ENCODE measurements at regions of chr15 and their contacts with region 1.

Region 1: GRCh38 chr15:52227456-52227855 is 36.3 kb upstream of the GNB5 start:
- DNase-seq: peak; percentile 25 to 67
- H3K4me3 ChIP-seq: no peak overlapping the region
- H3K27ac ChIP-seq: no peak overlapping the region
- H3K4me1 ChIP-seq: no peaks in the 10 kb centered on the region
- H3K27me3 ChIP-seq: no peaks in the 10 kb centered on the region
- CTCF ChIP-seq: peak; percentile 20 to 82 (median 58)
- EP300 ChIP-seq: no peak
- POLR2A ChIP-seq: no peak
- RAD21 ChIP-seq: peak; percentile 39 to 57; a peak in 3 of 4 replicates

Region 2: DNA sequence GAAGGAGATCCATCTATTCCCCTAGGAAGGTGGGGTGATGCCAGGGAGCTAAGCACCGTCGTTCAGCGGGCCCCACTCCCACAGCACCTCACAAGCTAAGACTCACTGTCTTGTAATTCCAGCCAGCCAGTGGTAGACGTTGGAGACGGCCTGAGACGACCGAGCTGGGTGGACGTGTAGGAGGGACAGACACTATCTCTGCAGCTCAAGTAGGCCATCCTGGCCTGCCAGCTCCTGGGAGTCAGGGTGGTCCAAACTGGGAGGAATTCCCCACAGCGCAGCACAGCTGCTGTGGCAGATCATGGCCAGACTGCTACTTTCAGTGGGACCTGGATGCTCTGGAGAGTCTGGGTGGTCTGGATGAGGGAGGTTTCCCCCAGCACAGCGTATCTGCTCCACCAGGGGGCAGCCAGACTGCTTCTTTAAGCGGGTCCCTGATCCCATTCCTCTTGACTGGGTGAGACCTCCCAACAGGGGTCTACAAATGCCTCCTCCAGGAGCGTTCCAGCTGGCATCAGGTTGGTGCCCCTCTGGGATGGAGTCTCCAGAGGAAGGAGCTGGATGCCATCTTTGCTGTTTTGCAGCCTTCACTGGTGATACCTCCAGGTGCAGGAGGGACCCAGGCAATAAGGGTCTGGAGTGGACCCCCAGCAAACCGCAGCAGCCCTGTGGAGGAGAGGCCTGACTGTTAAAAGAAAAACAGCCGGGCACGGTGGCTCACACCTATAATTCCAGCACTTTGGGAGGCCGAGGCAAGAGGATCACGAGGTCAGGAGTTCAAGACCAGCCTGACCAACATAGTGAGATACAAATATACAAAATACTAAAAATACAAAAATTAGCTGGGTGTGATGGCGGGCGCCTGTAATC is 63.9 kb before region 1 on chr15:
- CTCF ChIA-PET with region 1: interaction called, 12 read pairs
- POLR2A ChIA-PET with region 1: no interaction called
- DNase-seq: peak in 1 of 2 experiments; percentile 79
- H3K4me3 ChIP-seq: no peak overlapping the region
- H3K27ac ChIP-seq: peak overlapping the region; percentile 29
- H3K4me1 ChIP-seq: no peaks in the 10 kb centered on the region; a peak in 2 of 7 replicates
- H3K27me3 ChIP-seq: no peaks in the 10 kb centered on the region
- CTCF ChIP-seq: peak; percentile 69 to 77 (median 74)
- EP300 ChIP-seq: no peak
- POLR2A ChIP-seq: no peak
- RAD21 ChIP-seq: peak; percentile 57 to 67

Region 3: GRCh38 chr15:52179278-52180195 is 47.9 kb before region 1 on chr15:
- CTCF ChIA-PET with region 1: interaction called, 13 read pairs
- POLR2A ChIA-PET with region 1: interaction called, 3 read pairs
- DNase-seq: peak; percentile 56 to 92
- H3K4me3 ChIP-seq: peak overlapping the region; percentile 63 to 98 (median 81)
- H3K27ac ChIP-seq: peak overlapping the region; percentile 76; the same call in 1 of the 2 replicates
- H3K4me1 ChIP-seq: peaks cover 1 to 9% (median 3%) of the 10 kb centered on the region in 4 experiments; a peak in 4 of 7 replicates
- H3K27me3 ChIP-seq: peaks cover 0 to 8% (median 7%) of the 10 kb centered on the region in 4 experiments; a peak in 4 of 7 replicates
- CTCF ChIP-seq: no peak
- EP300 ChIP-seq: no peak; a peak in 1 of 3 replicates
- POLR2A ChIP-seq: peak; percentile 79 to 87
- RAD21 ChIP-seq: 0 out of 4 replicates have a peak, but pooled peaks of 1 of the 2 experiments have one; percentile 1

Region 4: GRCh38 chr15:52208306-52208946 is 19.0 kb before region 1 on chr15:
- CTCF ChIA-PET with region 1: interaction called, 26 read pairs
- POLR2A ChIA-PET with region 1: interaction called, 3 read pairs
- DNase-seq: peak; percentile 43 to 95
- H3K4me3 ChIP-seq: no peak overlapping the region
- H3K27ac ChIP-seq: no peak overlapping the region
- H3K4me1 ChIP-seq: no peaks in the 10 kb centered on the region
- H3K27me3 ChIP-seq: no peaks in the 10 kb centered on the region
- CTCF ChIP-seq: peak; percentile 66 to 98 (median 92)
- EP300 ChIP-seq: no peak
- POLR2A ChIP-seq: no peak
- RAD21 ChIP-seq: peak; percentile 66 to 77

Region 5: GRCh38 chr15:52217186-52217585 is 10.3 kb before region 1 on chr15:
- CTCF ChIA-PET with region 1: interaction called, 46 read pairs
- POLR2A ChIA-PET with region 1: no interaction called
- DNase-seq: peak; percentile 27 to 72
- H3K4me3 ChIP-seq: no peak overlapping the region
- H3K27ac ChIP-seq: no peak overlapping the region
- H3K4me1 ChIP-seq: no peaks in the 10 kb centered on the region
- H3K27me3 ChIP-seq: no peaks in the 10 kb centered on the region
- CTCF ChIP-seq: peak; percentile 60 to 75 (median 72)
- EP300 ChIP-seq: no peak
- POLR2A ChIP-seq: no peak
- RAD21 ChIP-seq: peak; percentile 29 to 55; a peak in 3 of 4 replicates

Region 6: DNA sequence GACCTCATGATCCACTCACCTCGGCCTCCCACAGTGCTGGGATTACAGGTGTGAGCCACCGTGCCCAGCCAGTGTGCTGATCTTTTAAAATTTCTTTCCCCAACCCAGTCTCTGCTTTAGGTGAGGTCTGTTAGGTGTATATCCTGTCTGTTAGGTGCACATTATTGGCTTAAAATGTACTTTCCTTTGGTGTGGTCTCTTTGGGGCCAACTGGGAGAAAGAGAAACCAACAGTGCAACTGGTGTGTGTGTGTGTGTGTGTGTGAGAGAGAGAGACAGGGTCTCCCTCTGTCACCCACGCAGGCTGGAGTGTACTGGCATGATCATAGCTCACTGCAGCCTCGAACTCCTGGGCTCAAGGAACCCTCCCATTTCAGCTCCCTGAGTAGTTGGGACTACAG is 14.0 kb after region 1 on chr15:
- CTCF ChIA-PET with region 1: interaction called, 23 read pairs
- POLR2A ChIA-PET with region 1: no interaction called
- DNase-seq: no peak
- H3K4me3 ChIP-seq: no peak overlapping the region
- H3K27ac ChIP-seq: no peak overlapping the region
- H3K4me1 ChIP-seq: no peaks in the 10 kb centered on the region
- H3K27me3 ChIP-seq: no peaks in the 10 kb centered on the region
- CTCF ChIP-seq: no peak
- EP300 ChIP-seq: no peak
- POLR2A ChIP-seq: no peak
- RAD21 ChIP-seq: no peak

Region 7: GRCh38 chr15:52256366-52256765 is 28.9 kb after region 1 on chr15:
- CTCF ChIA-PET with region 1: interaction called, 11 read pairs
- POLR2A ChIA-PET with region 1: no interaction called
- DNase-seq: peak; percentile 59 to 79
- H3K4me3 ChIP-seq: no peak overlapping the region
- H3K27ac ChIP-seq: no peak overlapping the region
- H3K4me1 ChIP-seq: peaks cover 11 to 15% (median 11%) of the 10 kb centered on the region in 4 experiments
- H3K27me3 ChIP-seq: no peaks in the 10 kb centered on the region
- CTCF ChIP-seq: peak; percentile 35 to 72 (median 63)
- EP300 ChIP-seq: no peak
- POLR2A ChIP-seq: no peak
- RAD21 ChIP-seq: peak; percentile 82 to 89

Region 8: DNA sequence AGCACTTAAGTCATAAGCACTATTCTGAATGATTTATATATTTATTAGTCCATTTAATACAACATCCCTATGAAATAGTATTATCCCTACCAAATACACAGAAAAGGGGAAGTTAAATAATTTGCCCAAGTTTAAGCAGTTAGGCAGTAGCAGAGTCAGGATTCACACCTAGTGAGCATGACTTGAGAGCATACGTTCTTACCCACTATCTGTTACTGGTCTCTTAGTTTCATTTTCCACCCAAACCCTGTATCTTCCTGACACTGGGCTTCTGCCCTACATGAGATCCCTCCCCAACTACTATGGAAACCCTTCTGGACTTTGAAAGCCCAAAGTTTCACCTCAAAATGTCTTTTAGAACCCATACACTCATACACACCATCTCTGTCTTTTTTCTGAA is 456.1 kb after region 1 on chr15:
- CTCF ChIA-PET with region 1: no interaction called
- POLR2A ChIA-PET with region 1: no interaction called
- DNase-seq: no peak
- H3K4me3 ChIP-seq: no peak overlapping the region
- H3K27ac ChIP-seq: no peak overlapping the region
- H3K4me1 ChIP-seq: peaks cover 0 to 2% (median 0%) of the 10 kb centered on the region in 4 experiments; a peak in 1 of 7 replicates
- H3K27me3 ChIP-seq: no peaks in the 10 kb centered on the region
- CTCF ChIP-seq: no peak
- EP300 ChIP-seq: no peak
- POLR2A ChIP-seq: no peak
- RAD21 ChIP-seq: no peak